Ascending aorta (tissue), 2 donors: ENCODE measurements at regions of chrX and their contacts with region 1.

Region 1: GRCh38 chrX:132631579-132632232 is 142.9 kb upstream of the MBNL3 start:
- DNase-seq: no peak
- H3K4me3 ChIP-seq: no peak overlapping the region
- H3K27ac ChIP-seq: no peak overlapping the region
- H3K4me1 ChIP-seq: no peaks in the 10 kb centered on the region
- H3K27me3 ChIP-seq: no peaks in the 10 kb centered on the region
- CTCF ChIP-seq: peak in 2 of 3 experiments; percentile 21 to 58

Region 2: GRCh38 chrX:132226169-132226568 is 405.5 kb before region 1 on chrX:
- intact Hi-C with region 1: loop called (anchors 10 kb)
- DNase-seq: no peak
- H3K4me3 ChIP-seq: no peak overlapping the region
- H3K27ac ChIP-seq: no peak overlapping the region
- H3K4me1 ChIP-seq: no peaks in the 10 kb centered on the region
- H3K27me3 ChIP-seq: no peaks in the 10 kb centered on the region
- CTCF ChIP-seq: no peak

Region 3: DNA sequence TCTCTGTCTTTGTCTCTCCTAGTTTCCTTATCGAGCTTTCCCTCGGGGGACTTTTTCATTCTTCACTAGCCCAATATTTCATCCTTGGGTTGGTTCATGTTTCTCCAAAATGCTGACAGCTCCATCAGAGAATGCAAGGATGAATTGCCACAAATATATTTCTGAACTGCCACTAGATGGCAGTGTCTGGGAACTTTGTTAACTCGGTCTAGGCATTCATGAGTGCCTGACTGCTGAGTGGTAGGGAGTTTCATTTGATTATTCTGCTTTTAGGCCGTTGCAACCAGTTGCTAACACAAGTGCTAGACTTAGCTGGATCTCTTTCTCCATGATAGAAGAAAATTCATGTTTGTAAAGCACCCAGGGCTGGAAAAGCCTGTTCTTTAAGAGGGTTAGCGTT is 338.9 kb before region 1 on chrX:
- intact Hi-C with region 1: loop called (anchors 5 kb)
- DNase-seq: no peak
- H3K4me3 ChIP-seq: no peak overlapping the region
- H3K27ac ChIP-seq: no peak overlapping the region
- H3K4me1 ChIP-seq: no peaks in the 10 kb centered on the region
- H3K27me3 ChIP-seq: no peaks in the 10 kb centered on the region
- CTCF ChIP-seq: peak; percentile 43 to 66 (median 56)